ENCODE measurements at regions of chr4 and their contacts with region 1.

Region 1: GRCh38 chr4:108118490-108118889 is 50.2 kb downstream of the LEF1 start:
- DNase-seq: peak in 8 of 14 experiments; percentile 31 to 76 (median 50)
- ATAC-seq: peak; percentile 61
- H3K4me3 ChIP-seq: no peak overlapping the region
- H3K4me3 Mint-ChIP-seq: peak overlapping the region; percentile 72
- H3K27ac ChIP-seq: peak overlapping the region; percentile 58 to 89
- H3K27ac Mint-ChIP-seq: peak overlapping the region; percentile 92
- H3K4me1 ChIP-seq: peaks cover 49% of the 10 kb centered on the region
- H3K4me1 Mint-ChIP-seq: peaks cover 95% of the 10 kb centered on the region
- H3K27me3 ChIP-seq: no peaks in the 10 kb centered on the region
- H3K27me3 Mint-ChIP-seq: no peaks in the 10 kb centered on the region
- CTCF ChIP-seq: no peak

Region 2: DNA sequence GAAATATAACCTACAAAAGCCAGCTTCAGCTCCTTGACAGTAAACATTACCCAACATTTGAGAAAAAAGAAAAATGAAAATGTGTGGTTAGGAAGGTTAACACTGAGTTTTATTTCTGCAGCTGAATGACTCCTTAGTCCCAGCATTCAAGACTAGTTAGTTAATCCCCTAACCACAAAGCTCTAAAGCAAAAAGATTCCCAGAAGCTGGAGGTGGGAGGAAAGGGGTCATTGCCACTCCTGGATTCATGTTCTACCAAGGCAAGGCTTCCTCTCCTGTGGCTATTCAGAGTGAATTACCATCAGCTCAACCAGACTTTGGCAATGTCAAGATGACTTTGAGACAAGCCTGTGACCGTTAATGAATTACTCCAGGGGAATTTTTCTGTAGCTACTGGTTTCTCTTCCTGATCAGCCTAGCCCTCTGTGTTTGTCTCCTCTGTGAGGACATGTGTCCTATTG is 65.2 kb before region 1 on chr4:
- CTCF ChIA-PET with region 1: no interaction called
- POLR2A ChIA-PET with region 1: interaction called, 3 read pairs
- intact Hi-C with region 1: loop called in 1 of 2 experiments (anchors 5 kb)
- DNase-seq: no peak
- ATAC-seq: no peak
- H3K4me3 ChIP-seq: no peak overlapping the region
- H3K4me3 Mint-ChIP-seq: peak overlapping the region; percentile 57
- H3K27ac ChIP-seq: peak overlapping the region in 1 of 2 donors; percentile 61
- H3K27ac Mint-ChIP-seq: peak overlapping the region; percentile 93
- H3K4me1 ChIP-seq: peaks cover 69% of the 10 kb centered on the region
- H3K4me1 Mint-ChIP-seq: peaks cover 97% of the 10 kb centered on the region
- H3K27me3 ChIP-seq: no peaks in the 10 kb centered on the region
- H3K27me3 Mint-ChIP-seq: no peaks in the 10 kb centered on the region
- CTCF ChIP-seq: no peak

Region 3: GRCh38 chr4:108080747-108081146 is 37.7 kb before region 1 on chr4:
- CTCF ChIA-PET with region 1: interaction called, 3 read pairs
- POLR2A ChIA-PET with region 1: interaction called, 18 read pairs
- intact Hi-C with region 1: loop called in 1 of 2 experiments (anchors 2 kb)
- DNase-seq: peak; percentile 35 to 77 (median 62)
- ATAC-seq: peak; percentile 84
- H3K4me3 ChIP-seq: no peak overlapping the region
- H3K4me3 Mint-ChIP-seq: peak overlapping the region; percentile 77
- H3K27ac ChIP-seq: peak overlapping the region in 1 of 2 donors; percentile 68
- H3K27ac Mint-ChIP-seq: peak overlapping the region; percentile 95
- H3K4me1 ChIP-seq: peaks cover 14% of the 10 kb centered on the region
- H3K4me1 Mint-ChIP-seq: peaks cover 78% of the 10 kb centered on the region
- H3K27me3 ChIP-seq: no peaks in the 10 kb centered on the region
- H3K27me3 Mint-ChIP-seq: no peaks in the 10 kb centered on the region
- CTCF ChIP-seq: no peak

Region 4: DNA sequence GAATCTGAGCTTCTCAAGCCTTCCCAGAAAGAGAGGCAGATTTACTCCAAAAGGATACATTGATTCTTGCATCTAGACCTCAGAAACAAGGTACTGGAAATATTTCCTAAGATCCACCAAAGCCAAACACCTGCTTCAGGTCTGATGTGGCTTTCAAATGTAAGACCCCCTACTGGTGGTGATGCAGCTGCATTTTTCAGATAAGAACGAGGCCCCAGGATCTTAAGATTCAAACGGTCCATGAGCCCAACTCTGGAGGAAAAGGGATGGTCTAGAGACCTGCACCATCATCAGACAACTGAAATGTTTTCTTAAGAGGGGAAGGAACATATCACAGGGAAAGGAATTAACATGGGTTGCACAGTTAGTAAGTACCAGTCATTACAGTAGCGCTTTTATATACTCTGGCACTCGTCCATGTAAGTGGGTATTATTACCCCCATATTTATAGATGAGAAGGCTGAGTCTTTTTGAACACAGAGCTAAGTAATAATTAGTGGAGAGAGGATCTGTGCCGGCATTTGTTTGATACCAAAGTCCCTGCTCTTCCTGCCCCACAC is 23.5 kb before region 1 on chr4:
- CTCF ChIA-PET with region 1: interaction called, 4 read pairs
- POLR2A ChIA-PET with region 1: interaction called, 81 read pairs
- intact Hi-C with region 1: no loop called
- DNase-seq: no peak
- ATAC-seq: peak; percentile 44
- H3K4me3 ChIP-seq: no peak overlapping the region
- H3K4me3 Mint-ChIP-seq: peak overlapping the region; percentile 67
- H3K27ac ChIP-seq: no peak overlapping the region
- H3K27ac Mint-ChIP-seq: peak overlapping the region; percentile 92
- H3K4me1 ChIP-seq: peaks cover 32% of the 10 kb centered on the region
- H3K4me1 Mint-ChIP-seq: peaks cover 94% of the 10 kb centered on the region
- H3K27me3 ChIP-seq: no peaks in the 10 kb centered on the region
- H3K27me3 Mint-ChIP-seq: no peaks in the 10 kb centered on the region
- CTCF ChIP-seq: no peak

Region 5: DNA sequence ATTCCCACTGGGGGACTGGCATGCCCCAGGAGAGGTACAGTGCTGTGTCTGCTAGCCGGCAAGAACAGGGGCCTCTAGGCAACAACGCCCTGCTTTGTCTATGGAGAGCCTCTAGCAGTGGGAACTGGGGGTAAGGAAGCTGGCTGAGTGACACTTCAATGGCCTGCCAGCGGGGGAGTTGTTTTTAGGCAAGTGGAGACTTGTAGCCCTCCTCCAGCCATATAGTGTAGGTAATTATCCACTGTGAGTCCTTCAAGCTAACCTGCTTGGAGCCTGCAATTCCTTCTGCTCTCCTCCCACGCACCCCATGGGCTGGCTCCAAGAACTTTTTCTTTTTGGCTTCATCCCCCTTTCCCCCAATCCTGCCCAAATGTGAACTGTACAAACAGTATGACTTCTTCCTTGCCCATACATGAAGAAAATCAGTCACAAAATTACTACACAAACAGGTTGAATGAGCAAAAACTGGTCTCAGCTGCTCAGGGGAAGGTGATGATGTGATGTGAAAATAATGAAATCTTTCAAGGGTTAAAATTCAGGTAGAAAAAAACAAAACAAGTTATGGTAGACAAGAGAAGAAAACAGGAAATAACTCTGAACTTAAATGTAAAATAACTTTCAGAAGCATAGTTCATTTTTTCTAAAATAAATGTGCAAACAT is 17.2 kb after region 1 on chr4:
- CTCF ChIA-PET with region 1: interaction called, 7 read pairs
- POLR2A ChIA-PET with region 1: interaction called, 216 read pairs
- intact Hi-C with region 1: loop called (anchors 2 kb)
- DNase-seq: peak in 2 of 14 experiments; percentile 32
- ATAC-seq: peak; percentile 13
- H3K4me3 ChIP-seq: peak overlapping the region; percentile 20
- H3K4me3 Mint-ChIP-seq: peak overlapping the region; percentile 77
- H3K27ac ChIP-seq: peak overlapping the region; percentile 29 to 61
- H3K27ac Mint-ChIP-seq: peak overlapping the region; percentile 98
- H3K4me1 ChIP-seq: peaks cover 50% of the 10 kb centered on the region
- H3K4me1 Mint-ChIP-seq: peaks cover 92% of the 10 kb centered on the region
- H3K27me3 ChIP-seq: no peaks in the 10 kb centered on the region
- H3K27me3 Mint-ChIP-seq: no peaks in the 10 kb centered on the region
- CTCF ChIP-seq: no peak

Region 6: DNA sequence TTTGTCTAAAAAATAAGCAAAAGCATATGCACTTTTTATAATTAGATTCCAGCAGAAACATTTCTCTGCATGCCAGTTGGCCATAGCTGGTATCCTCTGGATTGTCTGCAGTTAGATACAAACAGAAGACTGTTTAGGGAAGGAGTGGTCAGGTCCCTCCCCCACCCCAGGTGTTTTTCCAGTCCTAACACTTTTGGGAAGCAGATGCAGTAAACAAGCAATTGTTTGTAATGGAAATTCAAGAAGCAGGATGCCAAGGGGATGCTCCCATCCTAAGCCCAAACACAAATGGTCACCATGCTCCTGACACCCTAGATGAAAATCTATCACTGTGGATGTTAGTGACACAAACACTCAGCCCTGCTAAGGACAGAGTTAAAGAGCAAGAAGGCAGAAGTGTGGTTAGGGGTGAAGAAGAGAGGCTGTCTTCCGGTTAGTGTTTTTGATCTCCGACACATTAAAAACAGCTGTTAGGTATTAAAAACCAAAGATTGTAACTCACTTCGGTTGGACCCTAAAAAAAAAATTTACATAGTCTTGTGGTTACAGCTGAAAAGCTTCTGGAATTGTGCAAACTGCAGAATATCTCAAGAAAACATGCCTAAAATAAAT is 42.4 kb after region 1 on chr4:
- CTCF ChIA-PET with region 1: interaction called, 9 read pairs
- POLR2A ChIA-PET with region 1: interaction called, 65 read pairs
- intact Hi-C with region 1: loop called in 1 of 2 experiments (anchors 10 kb)
- DNase-seq: peak in 3 of 14 experiments; percentile 54 to 60 (median 59)
- ATAC-seq: peak; percentile 45
- H3K4me3 ChIP-seq: peak overlapping the region; percentile 76
- H3K4me3 Mint-ChIP-seq: peak overlapping the region; percentile 87
- H3K27ac ChIP-seq: peak overlapping the region; percentile 7 to 36
- H3K27ac Mint-ChIP-seq: peak overlapping the region; percentile 79
- H3K4me1 ChIP-seq: peaks cover 22% of the 10 kb centered on the region
- H3K4me1 Mint-ChIP-seq: peaks cover 71% of the 10 kb centered on the region
- H3K27me3 ChIP-seq: no peaks in the 10 kb centered on the region
- H3K27me3 Mint-ChIP-seq: no peaks in the 10 kb centered on the region
- CTCF ChIP-seq: no peak

Region 7: DNA sequence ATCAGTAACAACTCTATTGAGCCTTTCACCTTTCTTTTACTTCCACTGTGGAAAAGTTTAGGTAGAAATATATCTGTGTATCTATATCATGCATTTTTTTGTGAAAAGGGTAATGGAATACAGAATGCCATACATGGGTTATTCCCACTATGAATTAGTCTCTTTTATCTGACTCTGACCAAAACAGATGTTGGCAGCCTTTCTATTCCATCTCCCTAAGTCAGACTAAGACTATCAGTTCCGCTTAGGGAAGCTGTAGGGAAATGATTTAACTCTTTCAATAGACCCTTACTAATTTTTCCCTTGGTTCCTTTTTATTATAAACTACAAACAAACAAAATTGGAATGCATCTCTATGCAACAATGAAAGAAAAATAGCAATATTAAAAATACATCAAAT is 142.5 kb after region 1 on chr4:
- CTCF ChIA-PET with region 1: no interaction called
- POLR2A ChIA-PET with region 1: no interaction called
- intact Hi-C with region 1: no loop called
- DNase-seq: no peak
- ATAC-seq: no peak
- H3K4me3 ChIP-seq: no peak overlapping the region
- H3K4me3 Mint-ChIP-seq: no peak overlapping the region
- H3K27ac ChIP-seq: no peak overlapping the region
- H3K27ac Mint-ChIP-seq: no peak overlapping the region
- H3K4me1 ChIP-seq: no peaks in the 10 kb centered on the region
- H3K4me1 Mint-ChIP-seq: no peaks in the 10 kb centered on the region
- H3K27me3 ChIP-seq: no peaks in the 10 kb centered on the region
- H3K27me3 Mint-ChIP-seq: no peaks in the 10 kb centered on the region
- CTCF ChIP-seq: no peak